Esophagus squamous epithelium (tissue), 5 donors: ENCODE measurements at regions of chr4 and their contacts with region 1.

Region 1: DNA sequence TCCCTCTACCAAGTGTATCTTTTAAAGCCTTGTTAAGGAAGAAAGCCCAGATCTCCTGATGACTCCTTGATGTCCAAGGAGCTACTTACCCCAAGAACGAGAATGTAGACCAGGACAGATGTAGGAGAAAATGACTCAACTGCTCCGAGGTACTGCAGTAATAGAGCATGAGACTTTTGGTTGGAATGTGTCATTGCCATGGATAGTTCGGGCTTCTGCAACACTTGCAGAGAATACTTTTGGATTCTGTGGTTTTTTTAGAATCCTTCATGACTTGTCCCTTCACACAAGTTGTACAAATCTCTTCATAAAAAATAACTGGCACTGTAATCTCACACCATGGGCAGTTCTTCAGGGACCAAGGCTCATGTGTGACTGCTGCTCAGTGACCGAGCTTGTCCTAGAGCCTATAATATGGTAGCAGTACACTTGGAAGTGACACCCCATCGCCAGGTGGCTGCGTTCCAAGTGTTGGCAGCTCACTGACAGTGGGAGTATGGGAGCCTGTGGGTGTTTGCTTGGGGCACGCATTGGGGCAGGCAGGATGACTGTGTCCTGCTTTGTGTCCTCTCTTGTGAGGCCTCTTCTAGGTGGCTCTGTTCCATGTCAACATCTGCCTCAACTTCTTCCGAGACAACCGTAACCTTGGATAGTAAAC is 87.9 kb upstream of the WDR1 start:
- DNase-seq: no peak
- H3K4me3 ChIP-seq: no peak overlapping the region
- H3K27ac ChIP-seq: no peak overlapping the region
- H3K4me1 ChIP-seq: no peaks in the 10 kb centered on the region
- H3K27me3 ChIP-seq: peaks cover 0 to 7% (median 0%) of the 10 kb centered on the region in 4 donors
- CTCF ChIP-seq: no peak
- POLR2A ChIP-seq: no peak

Region 2: GRCh38 chr4:10239982-10240654 is 35.6 kb after region 1 on chr4:
- intact Hi-C with region 1: loop called (anchors 2 kb)
- DNase-seq: no peak
- H3K4me3 ChIP-seq: no peak overlapping the region
- H3K27ac ChIP-seq: no peak overlapping the region
- H3K4me1 ChIP-seq: no peaks in the 10 kb centered on the region
- H3K27me3 ChIP-seq: no peaks in the 10 kb centered on the region
- CTCF ChIP-seq: no peak
- POLR2A ChIP-seq: no peak